ENCODE measurements at regions of chr6 and their contacts with region 1.

Region 1: DNA sequence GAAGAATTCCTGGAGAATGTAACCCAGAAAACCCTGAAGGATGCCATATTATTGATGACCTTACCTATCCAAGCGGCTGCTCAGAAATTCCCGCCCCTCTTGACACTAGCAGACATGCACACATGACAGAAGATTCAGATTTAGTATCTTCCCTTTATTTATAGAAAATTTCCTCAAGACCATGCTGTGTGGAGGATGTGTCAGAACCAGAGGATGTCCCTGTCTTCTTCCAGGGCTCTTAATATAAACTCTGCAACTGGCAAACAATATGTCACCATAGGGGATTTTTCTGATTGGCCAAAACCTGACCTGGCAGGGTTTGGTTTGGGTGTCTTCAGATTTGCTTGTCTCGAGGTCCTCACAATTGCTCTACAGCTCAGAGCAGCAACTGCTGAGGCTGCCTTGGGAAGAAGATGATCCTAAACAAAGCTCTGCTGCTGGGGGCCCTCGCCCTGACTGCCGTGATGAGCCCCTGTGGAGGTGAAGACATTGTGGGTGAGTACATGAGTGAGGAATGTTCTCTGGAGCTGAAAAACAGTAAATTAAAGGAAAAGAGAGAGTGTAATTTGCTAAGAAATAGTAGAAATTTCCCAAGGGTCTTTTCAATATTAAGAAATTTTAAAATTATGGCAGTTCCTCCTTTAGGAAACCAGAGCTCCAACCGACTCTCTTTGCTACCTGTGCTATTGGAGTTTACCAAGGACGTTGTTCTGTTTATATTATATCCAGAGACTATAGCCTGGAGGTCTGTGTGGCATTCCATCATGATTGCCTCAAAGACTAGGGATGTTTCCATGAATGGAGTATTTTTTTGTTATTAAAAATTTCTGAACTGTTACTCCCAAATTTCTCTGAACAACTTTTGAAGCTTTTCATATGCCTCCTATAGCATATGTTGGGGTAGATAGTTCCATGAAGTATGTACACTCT is at the start of gene HLA-DQA2:
- DNase-seq: no peak
- ATAC-seq: no peak
- H3K4me3 ChIP-seq: no peak within 1 kb of the TSS
- H3K27ac ChIP-seq: no peak within 1 kb of the TSS
- H3K4me1 ChIP-seq: no peaks in the 10 kb centered on the region
- H3K27me3 ChIP-seq: 0 out of 2 replicates have a peak, but pooled peaks cover 2% of the 10 kb centered on the region
- CTCF ChIP-seq: no peak
- POLR2A ChIP-seq: no peak
- RAD21 ChIP-seq: no peak
- total RNA-seq, gene HLA-DQA2: not detected in 2 replicates

Region 2: GRCh38 chr6:32637219-32637880 is 103.9 kb before region 1 on chr6 and contains the start of gene HLA-DQA1:
- CTCF ChIA-PET with region 1: no interaction called
- POLR2A ChIA-PET with region 1: no interaction called
- dilution Hi-C with region 1: no loop called
- in situ Hi-C with region 1: loop called (anchors 5 kb)
- intact Hi-C with region 1: loop called (anchors 2 kb)
- DNase-seq: no peak
- ATAC-seq: no peak
- H3K4me3 ChIP-seq: no peak within 1 kb of the TSS
- H3K27ac ChIP-seq: no peak within 1 kb of the TSS
- H3K4me1 ChIP-seq: no peaks in the 10 kb centered on the region
- H3K27me3 ChIP-seq: no peaks in the 10 kb centered on the region
- CTCF ChIP-seq: no peak
- POLR2A ChIP-seq: no peak
- RAD21 ChIP-seq: no peak
- total RNA-seq, gene HLA-DQA1: not detected in 2 replicates

Region 3: GRCh38 chr6:32659856-32660595 is 81.3 kb before region 1 on chr6:
- CTCF ChIA-PET with region 1: no interaction called
- POLR2A ChIA-PET with region 1: no interaction called
- dilution Hi-C with region 1: no loop called
- in situ Hi-C with region 1: no loop called
- intact Hi-C with region 1: no loop called
- DNase-seq: no peak
- ATAC-seq: no peak
- H3K4me3 ChIP-seq: no peak overlapping the region
- H3K27ac ChIP-seq: no peak overlapping the region
- H3K4me1 ChIP-seq: no peaks in the 10 kb centered on the region
- H3K27me3 ChIP-seq: no peaks in the 10 kb centered on the region
- CTCF ChIP-seq: no peak
- POLR2A ChIP-seq: no peak
- RAD21 ChIP-seq: no peak